Calu3 (cell line): ENCODE measurements at regions of chr6 and their contacts with region 1.

Region 1: DNA sequence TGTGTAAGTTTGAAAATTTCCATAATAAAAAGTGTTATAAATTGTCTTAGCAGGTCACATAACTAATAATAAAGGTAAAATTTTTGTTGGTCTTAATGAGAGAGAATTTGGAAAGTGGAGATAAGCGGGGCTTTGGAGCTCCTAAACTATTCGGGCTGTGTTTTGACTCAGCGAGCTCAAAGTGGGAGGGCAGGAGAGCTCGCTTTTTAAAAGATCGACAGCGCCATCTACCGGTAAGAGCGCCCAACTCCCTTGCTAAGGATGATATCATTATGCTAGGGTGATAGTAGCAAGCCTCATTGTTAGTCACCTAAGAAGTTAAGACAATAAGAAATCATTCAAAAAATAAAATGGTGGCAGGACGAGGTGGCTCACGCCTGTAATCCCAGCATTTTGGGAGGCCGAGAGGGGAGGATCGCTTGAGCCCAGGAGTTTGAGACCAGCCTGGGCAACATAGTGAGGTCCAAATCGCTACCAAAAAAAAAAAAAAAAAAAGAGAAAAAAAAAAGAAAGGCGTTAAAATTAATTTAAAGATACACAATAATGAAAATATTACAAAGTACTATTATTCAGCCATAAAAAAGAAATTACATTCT is 24.8 kb downstream of the C6orf15 start:
- DNase-seq: peak; percentile 95
- H3K4me3 Mint-ChIP-seq: no peak overlapping the region
- H3K27ac Mint-ChIP-seq: no peak overlapping the region
- H3K4me1 Mint-ChIP-seq: peaks cover 33% of the 10 kb centered on the region
- H3K27me3 Mint-ChIP-seq: no peaks in the 10 kb centered on the region
- CTCF ChIP-seq: peak; percentile 89

Region 2: GRCh38 chr6:30489081-30490025 is 598.2 kb before region 1 on chr6 and contains the start of gene HLA-E:
- CTCF ChIA-PET with region 1: no interaction called
- intact Hi-C with region 1: loop called (anchors 10 kb)
- DNase-seq: peak; percentile 93
- H3K4me3 Mint-ChIP-seq: peak within 1 kb of the TSS; percentile 84
- H3K27ac Mint-ChIP-seq: peak within 1 kb of the TSS; percentile 97
- H3K4me1 Mint-ChIP-seq: peaks cover 8% of the 10 kb centered on the region
- H3K27me3 Mint-ChIP-seq: peaks cover 13% of the 10 kb centered on the region
- CTCF ChIP-seq: no peak
- total RNA-seq, gene HLA-E: 161 and 230 TPM in 2 replicates

Region 3: GRCh38 chr6:30664994-30665767 is 422.4 kb before region 1 on chr6:
- CTCF ChIA-PET with region 1: no interaction called
- intact Hi-C with region 1: no loop called
- DNase-seq: no peak
- H3K4me3 Mint-ChIP-seq: no peak overlapping the region
- H3K27ac Mint-ChIP-seq: no peak overlapping the region
- H3K4me1 Mint-ChIP-seq: peaks cover 3% of the 10 kb centered on the region
- H3K27me3 Mint-ChIP-seq: no peaks in the 10 kb centered on the region
- CTCF ChIP-seq: no peak

Region 4: DNA sequence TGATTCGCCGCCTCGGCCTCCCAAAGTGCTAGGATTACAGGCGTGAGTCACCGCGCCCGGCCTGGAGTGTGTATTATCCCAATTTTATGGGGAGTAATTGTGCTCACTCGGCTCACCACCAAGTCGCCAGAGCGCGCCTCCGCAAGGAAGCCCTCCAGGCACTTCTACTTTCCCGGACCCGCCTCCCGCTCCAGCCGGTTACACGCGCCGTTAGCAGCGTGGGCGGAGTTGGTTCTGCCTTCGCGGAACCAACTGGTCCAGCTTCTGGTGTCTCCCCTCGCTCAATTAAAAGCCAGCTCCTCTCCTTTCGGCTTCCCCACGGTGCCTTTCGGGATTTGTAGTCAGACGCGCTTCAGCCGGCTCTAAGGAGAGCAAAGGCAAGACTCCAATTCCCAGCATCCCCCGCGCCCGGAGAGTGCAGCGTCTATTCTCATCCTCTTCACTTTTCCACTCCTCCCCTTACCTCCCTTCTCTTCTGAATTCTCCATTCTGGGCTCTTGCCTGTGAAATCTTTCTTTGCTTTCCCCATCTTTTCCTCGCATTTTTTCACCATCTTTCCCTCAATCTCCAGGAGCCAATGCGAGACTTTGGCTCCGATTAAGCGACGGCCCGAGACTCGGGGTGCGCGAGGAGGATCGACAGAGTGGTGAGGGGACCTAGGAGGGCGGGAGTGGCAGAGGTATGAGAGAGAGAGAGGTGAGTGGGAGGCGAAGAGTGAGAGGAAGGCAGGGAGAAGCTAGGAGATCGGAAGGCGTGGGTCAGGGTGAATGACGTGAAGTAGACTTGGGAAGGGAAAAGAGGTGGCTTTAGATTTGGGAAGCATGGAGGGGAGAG is 179.6 kb before region 1 on chr6 and contains the start of gene GTF2H4:
- CTCF ChIA-PET with region 1: interaction called, 68 read pairs
- intact Hi-C with region 1: no loop called
- DNase-seq: peak; percentile 99
- H3K4me3 Mint-ChIP-seq: peak within 1 kb of the TSS; percentile 97
- H3K27ac Mint-ChIP-seq: peak within 1 kb of the TSS; percentile 76
- H3K4me1 Mint-ChIP-seq: peaks cover 18% of the 10 kb centered on the region
- H3K27me3 Mint-ChIP-seq: no peaks in the 10 kb centered on the region
- CTCF ChIP-seq: no peak
- total RNA-seq, gene GTF2H4: 70.5 and 80.0 TPM in 2 replicates

Region 5: DNA sequence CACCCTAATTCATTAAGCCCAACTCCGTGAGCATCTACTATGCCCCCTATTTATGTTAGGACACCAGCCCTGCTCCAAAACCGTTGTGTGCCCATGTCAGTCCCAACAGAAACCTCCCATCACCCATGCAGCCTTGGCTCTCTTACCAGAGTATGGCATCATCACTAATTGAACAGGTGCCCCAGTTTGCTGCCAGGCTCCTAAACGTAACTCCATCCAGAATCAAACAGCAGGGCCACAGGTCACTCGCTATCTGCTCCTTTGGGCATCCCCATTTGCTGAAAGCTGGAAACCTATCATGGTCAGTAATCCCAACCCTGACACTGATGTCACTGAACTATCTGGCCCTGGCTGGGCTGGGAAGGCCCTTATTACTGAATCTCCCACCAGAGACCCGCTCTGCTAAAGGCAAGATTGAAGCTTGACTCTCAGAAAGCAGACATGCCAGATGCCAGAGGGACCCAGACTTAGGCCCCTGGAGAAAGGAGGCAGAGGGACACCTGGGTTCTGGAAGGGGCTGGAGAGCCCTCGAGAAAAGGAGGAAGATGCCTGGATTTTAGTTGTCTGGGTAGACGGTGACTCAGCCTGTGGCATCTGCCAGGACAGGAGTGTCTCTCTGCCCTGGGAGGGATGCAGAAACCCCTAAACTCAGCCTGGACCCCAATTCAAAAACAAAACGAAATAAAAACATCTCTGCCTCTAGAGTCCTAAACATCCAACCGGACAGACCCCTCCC is 132.8 kb before region 1 on chr6:
- CTCF ChIA-PET with region 1: no interaction called
- intact Hi-C with region 1: no loop called
- DNase-seq: no peak
- H3K4me3 Mint-ChIP-seq: peak overlapping the region; percentile 46
- H3K27ac Mint-ChIP-seq: no peak overlapping the region
- H3K4me1 Mint-ChIP-seq: no peaks in the 10 kb centered on the region
- H3K27me3 Mint-ChIP-seq: peaks cover 89% of the 10 kb centered on the region
- CTCF ChIP-seq: no peak

Region 6: DNA sequence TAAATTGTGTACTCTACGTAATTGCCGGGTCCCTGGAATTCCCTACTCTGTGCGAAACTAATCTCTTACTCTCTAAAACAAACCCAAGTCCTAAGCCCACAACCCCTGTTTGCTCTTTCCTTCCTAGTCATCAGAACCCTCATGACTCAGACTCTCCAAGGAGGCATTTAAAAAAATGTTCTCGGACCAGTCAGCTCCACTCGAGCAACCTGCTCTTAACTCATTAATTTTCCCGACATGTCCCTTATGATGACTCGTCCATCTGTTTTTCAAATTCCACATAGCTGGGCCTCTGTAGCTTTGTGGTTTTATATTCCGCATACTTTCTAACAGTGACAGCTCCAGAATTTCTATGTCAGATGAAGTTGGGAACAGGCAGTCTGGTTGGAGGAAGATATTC is 79.9 kb before region 1 on chr6:
- CTCF ChIA-PET with region 1: interaction called, 10 read pairs
- intact Hi-C with region 1: no loop called
- DNase-seq: peak; percentile 72
- H3K4me3 Mint-ChIP-seq: peak overlapping the region; percentile 27
- H3K27ac Mint-ChIP-seq: peak overlapping the region; percentile 85
- H3K4me1 Mint-ChIP-seq: peaks cover 70% of the 10 kb centered on the region
- H3K27me3 Mint-ChIP-seq: no peaks in the 10 kb centered on the region
- CTCF ChIP-seq: no peak

Region 7: GRCh38 chr6:31103136-31103535 is 15.5 kb after region 1 on chr6:
- CTCF ChIA-PET with region 1: interaction called, 14 read pairs
- intact Hi-C with region 1: no loop called
- DNase-seq: no peak
- H3K4me3 Mint-ChIP-seq: no peak overlapping the region
- H3K27ac Mint-ChIP-seq: no peak overlapping the region
- H3K4me1 Mint-ChIP-seq: no peaks in the 10 kb centered on the region
- H3K27me3 Mint-ChIP-seq: peaks cover 10% of the 10 kb centered on the region
- CTCF ChIP-seq: no peak

Region 8: DNA sequence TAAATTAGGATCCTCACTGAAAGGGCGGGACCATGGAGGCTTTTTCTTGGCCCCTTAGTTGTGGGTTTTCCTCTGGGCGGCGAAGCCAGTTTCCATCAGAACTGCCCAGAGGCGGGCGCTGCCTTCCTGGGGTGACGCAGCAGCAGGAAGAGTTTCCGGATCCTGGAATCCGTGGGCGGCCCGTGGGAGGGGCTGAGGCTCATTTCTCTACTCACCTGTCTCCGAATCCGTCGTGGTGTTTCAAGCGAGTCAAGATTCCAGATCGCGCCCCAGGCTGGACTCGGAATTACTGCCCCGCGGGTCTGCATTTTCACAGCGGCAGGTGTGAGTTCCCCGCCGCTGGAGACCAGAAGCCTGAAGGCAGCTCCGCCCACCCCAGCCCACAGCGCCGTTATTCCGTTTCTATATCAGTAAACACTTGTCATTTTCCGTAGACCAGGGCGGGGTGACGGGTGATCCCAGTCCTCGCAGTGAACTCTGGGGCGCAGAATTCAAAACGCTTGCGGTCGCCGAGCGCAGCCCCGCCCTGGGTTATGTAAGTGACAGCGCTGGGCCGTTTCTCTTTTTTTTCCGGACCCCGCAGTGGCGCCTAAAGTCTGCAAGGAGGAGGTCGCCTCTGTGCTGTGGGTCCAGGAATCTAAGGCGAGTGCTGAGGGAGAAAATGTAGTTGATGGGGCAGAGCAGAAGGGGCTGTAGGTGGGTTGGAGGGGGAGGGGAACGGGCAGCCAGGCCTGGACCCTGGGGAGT is 110.1 kb after region 1 on chr6:
- CTCF ChIA-PET with region 1: interaction called, 12 read pairs
- intact Hi-C with region 1: no loop called
- DNase-seq: peak; percentile 95
- H3K4me3 Mint-ChIP-seq: peak overlapping the region; percentile 88
- H3K27ac Mint-ChIP-seq: peak overlapping the region; percentile 33
- H3K4me1 Mint-ChIP-seq: peaks cover 61% of the 10 kb centered on the region
- H3K27me3 Mint-ChIP-seq: no peaks in the 10 kb centered on the region
- CTCF ChIP-seq: no peak